ENCODE measurements at regions of chr6 and their contacts with region 1.

Region 1: GRCh38 chr6:42532038-42532669 is 31.7 kb upstream of the UBR2 start:
- DNase-seq: peak in 5 of 14 experiments; percentile 5 to 73 (median 62)
- ATAC-seq: peak; percentile 54
- H3K4me3 ChIP-seq: no peak overlapping the region
- H3K4me3 Mint-ChIP-seq: no peak overlapping the region
- H3K27ac ChIP-seq: no peak overlapping the region
- H3K27ac Mint-ChIP-seq: no peak overlapping the region
- H3K4me1 ChIP-seq: no peaks in the 10 kb centered on the region
- H3K4me1 Mint-ChIP-seq: no peaks in the 10 kb centered on the region
- H3K27me3 ChIP-seq: no peaks in the 10 kb centered on the region
- H3K27me3 Mint-ChIP-seq: no peaks in the 10 kb centered on the region
- CTCF ChIP-seq: peak; percentile 91

Region 2: DNA sequence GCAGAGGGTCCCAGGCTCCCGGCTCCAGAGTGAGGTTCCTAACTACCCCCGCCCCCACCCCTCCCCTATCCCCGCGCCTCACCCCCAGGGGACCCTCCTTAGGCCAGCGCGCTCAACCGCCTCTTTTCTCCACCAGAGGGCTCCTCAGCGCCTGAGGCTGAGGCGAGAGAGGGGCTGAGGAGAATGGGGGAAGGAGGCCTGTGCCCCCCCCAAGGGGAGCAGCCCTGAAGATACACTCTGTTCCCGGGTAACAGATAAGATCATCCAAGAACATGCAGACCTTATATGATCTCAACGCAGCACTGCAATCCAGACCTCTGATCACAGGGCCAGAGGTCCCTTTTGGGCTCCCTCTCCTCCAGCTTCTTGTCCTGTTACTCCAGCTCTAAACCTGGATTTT is 271.2 kb before region 1 on chr6:
- CTCF ChIA-PET with region 1: interaction called, 3 read pairs
- POLR2A ChIA-PET with region 1: no interaction called
- intact Hi-C with region 1: loop called in 1 of 2 experiments (anchors 2 kb)
- DNase-seq: peak in 13 of 14 experiments; percentile 14 to 55 (median 26)
- ATAC-seq: peak; percentile 63
- H3K4me3 ChIP-seq: no peak overlapping the region
- H3K4me3 Mint-ChIP-seq: no peak overlapping the region
- H3K27ac ChIP-seq: no peak overlapping the region
- H3K27ac Mint-ChIP-seq: no peak overlapping the region
- H3K4me1 ChIP-seq: no peaks in the 10 kb centered on the region
- H3K4me1 Mint-ChIP-seq: peaks cover 7% of the 10 kb centered on the region
- H3K27me3 ChIP-seq: no peaks in the 10 kb centered on the region
- H3K27me3 Mint-ChIP-seq: no peaks in the 10 kb centered on the region
- CTCF ChIP-seq: peak; percentile 56

Region 3: DNA sequence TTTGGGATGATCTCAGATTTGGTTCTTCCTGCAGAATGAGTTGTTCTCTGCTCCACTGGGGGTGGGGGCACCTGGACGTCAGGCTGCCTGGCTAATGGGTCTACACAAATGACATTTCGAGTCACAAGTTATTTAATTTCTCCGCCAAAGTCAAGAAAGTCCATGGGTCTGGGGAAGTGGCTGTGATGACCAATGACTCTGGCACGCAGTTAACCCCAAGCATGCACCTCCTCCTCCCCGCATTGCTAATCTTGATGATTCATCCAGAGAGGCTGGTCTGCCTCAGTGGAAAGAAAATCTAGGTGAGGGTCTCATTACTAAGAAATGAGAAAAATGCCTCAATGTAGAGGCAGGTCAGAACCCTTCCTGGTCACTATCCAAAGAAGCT is 216.2 kb before region 1 on chr6:
- CTCF ChIA-PET with region 1: interaction called, 6 read pairs
- POLR2A ChIA-PET with region 1: no interaction called
- intact Hi-C with region 1: loop called in 1 of 2 experiments (anchors 5 kb)
- DNase-seq: peak in 2 of 14 experiments; percentile 55 to 70
- ATAC-seq: no peak
- H3K4me3 ChIP-seq: no peak overlapping the region
- H3K4me3 Mint-ChIP-seq: no peak overlapping the region
- H3K27ac ChIP-seq: no peak overlapping the region
- H3K27ac Mint-ChIP-seq: peak overlapping the region; percentile 75
- H3K4me1 ChIP-seq: peaks cover 37% of the 10 kb centered on the region
- H3K4me1 Mint-ChIP-seq: peaks cover 60% of the 10 kb centered on the region
- H3K27me3 ChIP-seq: no peaks in the 10 kb centered on the region
- H3K27me3 Mint-ChIP-seq: no peaks in the 10 kb centered on the region
- CTCF ChIP-seq: no peak

Measured in CD4-positive, alpha-beta T cell (primary cell).